ENCODE measurements at regions of chr6 and their contacts with region 1.

Region 1: GRCh38 chr6:140043336-140043735 is 668.9 kb upstream of the CITED2 start:
- DNase-seq: peak; percentile 66
- H3K4me3 ChIP-seq: no peak overlapping the region
- H3K27ac ChIP-seq: peak overlapping the region; percentile 73
- H3K4me1 ChIP-seq: peaks cover 47% of the 10 kb centered on the region
- H3K27me3 ChIP-seq: no peaks in the 10 kb centered on the region
- CTCF ChIP-seq: no peak

Region 2: DNA sequence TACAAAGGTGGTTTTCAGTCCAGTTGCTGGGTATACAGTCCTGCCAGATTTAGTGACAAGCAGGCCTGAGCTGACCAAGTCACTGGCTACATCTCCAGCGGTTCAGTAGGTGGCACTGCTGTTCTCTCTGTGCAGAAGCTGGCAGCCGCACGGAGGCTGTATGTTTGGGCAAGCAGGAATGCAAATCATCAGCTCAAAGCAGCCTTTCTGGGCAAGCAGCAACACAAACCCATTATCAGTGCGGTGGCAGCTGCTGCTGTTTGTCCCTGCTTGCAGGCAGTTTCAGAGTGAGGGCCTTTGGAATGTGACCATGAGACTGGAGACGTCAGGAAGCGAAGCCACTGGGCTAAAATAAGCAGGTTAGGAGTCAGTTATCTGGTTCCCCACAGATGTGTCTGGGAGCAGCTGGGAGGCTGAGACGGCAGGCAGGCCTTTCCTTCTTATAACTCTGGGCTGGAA is 824.0 kb before region 1 on chr6:
- CTCF ChIA-PET with region 1: no interaction called
- POLR2A ChIA-PET with region 1: no interaction called
- intact Hi-C with region 1: loop called (anchors 10 kb)
- DNase-seq: peak; percentile 90
- H3K4me3 ChIP-seq: no peak overlapping the region
- H3K27ac ChIP-seq: peak overlapping the region; percentile 49
- H3K4me1 ChIP-seq: peaks cover 8% of the 10 kb centered on the region
- H3K27me3 ChIP-seq: no peaks in the 10 kb centered on the region
- CTCF ChIP-seq: peak; percentile 85

Region 3: GRCh38 chr6:139522511-139523220 is 520.7 kb before region 1 on chr6:
- CTCF ChIA-PET with region 1: interaction called, 6 read pairs
- POLR2A ChIA-PET with region 1: interaction called, 3 read pairs
- intact Hi-C with region 1: loop called (anchors 1 kb)
- DNase-seq: peak; percentile 52
- H3K4me3 ChIP-seq: no peak overlapping the region
- H3K27ac ChIP-seq: peak overlapping the region; percentile 94
- H3K4me1 ChIP-seq: peaks cover 35% of the 10 kb centered on the region
- H3K27me3 ChIP-seq: no peaks in the 10 kb centered on the region
- CTCF ChIP-seq: no peak

Region 4: GRCh38 chr6:139872665-139873064 is 170.7 kb before region 1 on chr6:
- CTCF ChIA-PET with region 1: no interaction called
- POLR2A ChIA-PET with region 1: interaction called, 3 read pairs
- intact Hi-C with region 1: loop called (anchors 1 kb)
- DNase-seq: peak; percentile 58
- H3K4me3 ChIP-seq: no peak overlapping the region
- H3K27ac ChIP-seq: peak overlapping the region; percentile 98
- H3K4me1 ChIP-seq: peaks cover 48% of the 10 kb centered on the region
- H3K27me3 ChIP-seq: no peaks in the 10 kb centered on the region
- CTCF ChIP-seq: no peak

Region 5: GRCh38 chr6:139981768-139982181 is 61.6 kb before region 1 on chr6:
- CTCF ChIA-PET with region 1: no interaction called
- POLR2A ChIA-PET with region 1: interaction called, 10 read pairs
- intact Hi-C with region 1: loop called (anchors 1 kb)
- DNase-seq: peak; percentile 97
- H3K4me3 ChIP-seq: peak overlapping the region; percentile 11
- H3K27ac ChIP-seq: peak overlapping the region; percentile 89
- H3K4me1 ChIP-seq: peaks cover 53% of the 10 kb centered on the region
- H3K27me3 ChIP-seq: no peaks in the 10 kb centered on the region
- CTCF ChIP-seq: no peak

Region 6: DNA sequence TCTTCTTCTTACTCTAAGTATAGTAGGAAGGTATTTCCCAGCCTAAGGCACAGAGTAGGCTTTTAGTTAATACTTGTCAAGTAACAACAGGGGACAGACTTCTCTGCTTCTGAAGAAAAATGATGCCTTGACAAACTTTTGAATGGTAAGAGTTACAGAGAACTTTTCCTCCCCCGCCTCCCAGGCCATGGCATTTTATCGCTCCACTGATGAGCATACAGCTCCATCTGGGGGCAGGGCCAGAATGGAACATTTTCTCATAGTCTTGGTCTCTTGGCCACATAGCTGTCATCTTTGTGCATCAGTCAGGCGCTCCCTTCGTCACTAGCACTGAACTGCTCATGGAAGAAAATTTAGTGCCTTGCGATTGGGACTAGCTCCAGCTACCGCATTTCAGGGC is 397.9 kb after region 1 on chr6:
- CTCF ChIA-PET with region 1: no interaction called
- POLR2A ChIA-PET with region 1: no interaction called
- intact Hi-C with region 1: loop called (anchors 1 kb)
- DNase-seq: peak; percentile 93
- H3K4me3 ChIP-seq: no peak overlapping the region
- H3K27ac ChIP-seq: peak overlapping the region; percentile 78
- H3K4me1 ChIP-seq: peaks cover 47% of the 10 kb centered on the region
- H3K27me3 ChIP-seq: no peaks in the 10 kb centered on the region
- CTCF ChIP-seq: peak; percentile 70